Mammary epithelial cell (primary cell): ENCODE measurements at regions of chr10 and their contacts with region 1.

Region 1: GRCh38 chr10:79542626-79543025 is 17.6 kb downstream of the SFTPA2 start:
- DNase-seq: no peak
- H3K4me3 ChIP-seq: no peak overlapping the region
- H3K27ac ChIP-seq: no peak overlapping the region
- H3K4me1 ChIP-seq: no peaks in the 10 kb centered on the region
- H3K27me3 ChIP-seq: peaks cover 2% of the 10 kb centered on the region
- CTCF ChIP-seq: no peak

Region 2: GRCh38 chr10:79929409-79929904 is 386.8 kb after region 1 on chr10:
- CTCF ChIA-PET with region 1: no interaction called
- dilution Hi-C with region 1: no loop called
- in situ Hi-C with region 1: no loop called
- intact Hi-C with region 1: loop called (anchors 1 kb)
- DNase-seq: peak; percentile 54
- H3K4me3 ChIP-seq: no peak overlapping the region
- H3K27ac ChIP-seq: no peak overlapping the region
- H3K4me1 ChIP-seq: peaks cover 4% of the 10 kb centered on the region
- H3K27me3 ChIP-seq: peaks cover 10% of the 10 kb centered on the region
- CTCF ChIP-seq: peak; percentile 71 to 93